ENCODE measurements at regions of chr5 and their contacts with region 1.

Region 1: DNA sequence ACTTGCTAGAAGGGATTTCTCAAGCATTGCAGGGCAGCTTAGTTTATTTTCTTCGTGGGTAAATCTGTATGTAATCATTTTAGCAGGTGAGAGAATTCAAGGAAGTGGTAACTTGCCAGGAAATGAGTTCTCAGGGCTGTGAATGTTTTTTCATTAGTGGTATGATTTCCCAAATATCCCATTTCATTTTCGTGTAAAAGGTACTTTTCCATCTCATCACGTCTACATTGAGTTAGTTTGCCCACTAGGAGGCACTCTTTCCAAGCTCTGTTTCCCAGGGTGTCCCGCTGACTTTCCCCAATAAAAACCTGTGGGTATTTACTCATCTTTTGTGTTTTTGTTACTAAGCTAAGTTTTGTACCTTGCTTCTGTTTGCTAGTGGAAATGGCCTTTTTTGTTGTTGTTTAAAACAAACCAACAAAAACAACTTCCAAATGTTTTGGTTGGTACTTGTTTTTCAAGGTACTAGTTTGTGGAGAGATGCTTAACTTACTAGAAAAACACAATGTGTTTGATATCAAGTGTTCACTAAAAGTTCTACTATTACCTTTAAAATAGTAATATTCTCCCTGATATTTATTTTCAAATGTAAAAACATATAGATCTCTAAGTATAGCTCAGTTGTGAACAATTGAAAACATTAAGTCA is 373.6 kb downstream of the ADGRV1 start:
- DNase-seq: peak; percentile 33
- ATAC-seq: peak; percentile 42
- H3K4me3 Mint-ChIP-seq: no peak overlapping the region
- H3K27ac Mint-ChIP-seq: no peak overlapping the region
- H3K4me1 Mint-ChIP-seq: peaks cover 2% of the 10 kb centered on the region
- H3K27me3 Mint-ChIP-seq: peaks cover 4% of the 10 kb centered on the region
- CTCF ChIP-seq: peak; percentile 89

Region 2: DNA sequence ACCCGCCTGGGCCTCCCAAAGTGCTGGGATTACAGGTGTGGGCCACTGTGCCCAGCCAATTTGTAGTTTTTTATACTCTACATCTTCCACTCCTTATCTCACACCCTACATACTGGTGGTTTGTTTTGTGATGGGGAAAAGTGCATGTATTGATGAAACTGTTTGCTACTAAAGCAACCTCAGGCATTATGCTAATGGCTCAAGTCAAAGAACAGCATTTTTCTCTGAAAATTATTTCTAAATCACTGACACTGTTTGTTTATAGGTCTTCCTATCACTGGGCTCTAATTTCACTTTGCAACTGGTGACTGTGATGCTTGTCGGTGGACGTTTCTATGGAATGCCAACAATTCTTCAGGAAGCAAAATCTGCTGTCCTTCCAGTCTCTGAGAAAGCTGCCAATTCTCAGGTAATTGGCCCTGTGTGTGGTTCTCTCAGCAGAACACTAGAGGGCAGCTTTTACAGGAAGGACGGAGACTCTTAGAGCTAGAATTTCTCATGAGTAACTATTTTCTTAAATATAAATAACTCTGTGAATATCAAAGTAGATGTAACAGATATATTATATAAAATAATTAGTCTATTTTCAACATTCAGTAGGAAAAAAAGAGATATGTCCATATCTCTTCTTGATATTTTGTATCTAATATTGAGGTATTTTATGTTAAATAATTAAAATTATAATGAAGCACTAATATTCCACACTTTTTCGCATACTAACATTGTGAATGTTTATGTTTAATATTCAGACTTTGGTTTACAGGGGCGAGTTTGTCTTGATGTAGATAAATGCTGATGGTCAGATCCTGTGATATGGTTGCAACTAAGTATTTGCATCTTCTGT is 129.5 kb before region 1 on chr5:
- CTCF ChIA-PET with region 1: no interaction called
- POLR2A ChIA-PET with region 1: no interaction called
- intact Hi-C with region 1: no loop called
- DNase-seq: peak; percentile 12
- ATAC-seq: peak; percentile 62
- H3K4me3 Mint-ChIP-seq: no peak overlapping the region
- H3K27ac Mint-ChIP-seq: no peak overlapping the region
- H3K4me1 Mint-ChIP-seq: no peaks in the 10 kb centered on the region
- H3K27me3 Mint-ChIP-seq: peaks cover 2% of the 10 kb centered on the region
- CTCF ChIP-seq: peak; percentile 72

Region 3: DNA sequence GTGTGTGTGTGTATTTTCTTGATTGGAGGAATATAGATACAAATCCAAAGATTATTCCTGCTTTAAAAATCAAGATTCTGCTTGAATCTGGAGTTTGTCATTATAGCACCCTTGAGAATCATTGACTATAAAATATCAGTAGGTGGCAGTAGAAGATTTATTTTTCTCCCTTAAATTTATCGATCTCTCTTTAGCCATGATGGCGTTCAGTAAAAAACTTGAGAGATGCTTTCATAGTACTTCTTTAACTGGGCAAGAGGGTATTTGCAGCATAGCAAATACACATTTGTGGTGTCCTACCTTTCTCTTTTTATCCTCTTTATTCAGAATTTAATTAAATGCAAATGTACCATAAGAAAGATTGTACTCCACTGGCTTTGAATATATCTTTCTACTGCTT is 65.8 kb before region 1 on chr5:
- CTCF ChIA-PET with region 1: interaction called, 15 read pairs
- POLR2A ChIA-PET with region 1: no interaction called
- intact Hi-C with region 1: no loop called
- DNase-seq: no peak
- ATAC-seq: peak; percentile 49
- H3K4me3 Mint-ChIP-seq: no peak overlapping the region
- H3K27ac Mint-ChIP-seq: no peak overlapping the region
- H3K4me1 Mint-ChIP-seq: peaks cover 13% of the 10 kb centered on the region
- H3K27me3 Mint-ChIP-seq: peaks cover 6% of the 10 kb centered on the region
- CTCF ChIP-seq: peak; percentile 52

Region 4: DNA sequence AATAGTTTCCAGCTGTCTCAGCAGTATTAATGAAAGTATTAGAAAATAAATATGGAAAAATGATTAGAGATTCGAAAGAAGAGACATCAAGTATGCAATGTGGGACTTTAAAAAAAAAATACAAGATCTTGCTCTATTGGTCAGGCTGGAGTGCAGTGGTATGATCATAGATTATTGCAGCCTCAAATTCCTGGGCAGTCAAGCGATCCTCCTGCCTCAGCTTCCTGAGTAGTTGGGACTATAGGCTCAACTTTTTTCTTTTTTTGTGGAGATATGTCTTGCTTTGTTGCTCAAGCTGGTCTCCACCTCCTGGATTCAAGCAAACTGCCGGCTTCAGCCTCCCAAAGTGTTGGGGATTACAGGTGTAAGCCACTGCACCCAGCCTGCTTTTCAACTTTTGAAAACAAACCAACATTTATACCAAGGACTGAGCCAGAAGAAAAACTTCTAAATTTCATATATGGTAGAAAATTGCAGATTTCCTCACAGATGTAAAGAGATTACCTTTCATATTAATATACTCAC is 50.5 kb before region 1 on chr5:
- CTCF ChIA-PET with region 1: interaction called, 13 read pairs
- POLR2A ChIA-PET with region 1: no interaction called
- intact Hi-C with region 1: no loop called
- DNase-seq: no peak
- ATAC-seq: no peak
- H3K4me3 Mint-ChIP-seq: no peak overlapping the region
- H3K27ac Mint-ChIP-seq: no peak overlapping the region
- H3K4me1 Mint-ChIP-seq: no peaks in the 10 kb centered on the region
- H3K27me3 Mint-ChIP-seq: peaks cover 20% of the 10 kb centered on the region
- CTCF ChIP-seq: no peak

Region 5: GRCh38 chr5:90921418-90921973 is 10.7 kb before region 1 on chr5:
- CTCF ChIA-PET with region 1: interaction called, 19 read pairs
- POLR2A ChIA-PET with region 1: no interaction called
- intact Hi-C with region 1: no loop called
- DNase-seq: no peak
- ATAC-seq: no peak
- H3K4me3 Mint-ChIP-seq: no peak overlapping the region
- H3K27ac Mint-ChIP-seq: no peak overlapping the region
- H3K4me1 Mint-ChIP-seq: no peaks in the 10 kb centered on the region
- H3K27me3 Mint-ChIP-seq: peaks cover 3% of the 10 kb centered on the region
- CTCF ChIP-seq: no peak

Region 6: GRCh38 chr5:91059409-91059808 is 127.2 kb after region 1 on chr5:
- CTCF ChIA-PET with region 1: interaction called, 11 read pairs
- POLR2A ChIA-PET with region 1: no interaction called
- intact Hi-C with region 1: loop called (anchors 5 kb)
- DNase-seq: no peak
- ATAC-seq: peak; percentile 86
- H3K4me3 Mint-ChIP-seq: no peak overlapping the region
- H3K27ac Mint-ChIP-seq: peak overlapping the region; percentile 31
- H3K4me1 Mint-ChIP-seq: peaks cover 41% of the 10 kb centered on the region
- H3K27me3 Mint-ChIP-seq: peaks cover 16% of the 10 kb centered on the region
- CTCF ChIP-seq: no peak

Region 7: DNA sequence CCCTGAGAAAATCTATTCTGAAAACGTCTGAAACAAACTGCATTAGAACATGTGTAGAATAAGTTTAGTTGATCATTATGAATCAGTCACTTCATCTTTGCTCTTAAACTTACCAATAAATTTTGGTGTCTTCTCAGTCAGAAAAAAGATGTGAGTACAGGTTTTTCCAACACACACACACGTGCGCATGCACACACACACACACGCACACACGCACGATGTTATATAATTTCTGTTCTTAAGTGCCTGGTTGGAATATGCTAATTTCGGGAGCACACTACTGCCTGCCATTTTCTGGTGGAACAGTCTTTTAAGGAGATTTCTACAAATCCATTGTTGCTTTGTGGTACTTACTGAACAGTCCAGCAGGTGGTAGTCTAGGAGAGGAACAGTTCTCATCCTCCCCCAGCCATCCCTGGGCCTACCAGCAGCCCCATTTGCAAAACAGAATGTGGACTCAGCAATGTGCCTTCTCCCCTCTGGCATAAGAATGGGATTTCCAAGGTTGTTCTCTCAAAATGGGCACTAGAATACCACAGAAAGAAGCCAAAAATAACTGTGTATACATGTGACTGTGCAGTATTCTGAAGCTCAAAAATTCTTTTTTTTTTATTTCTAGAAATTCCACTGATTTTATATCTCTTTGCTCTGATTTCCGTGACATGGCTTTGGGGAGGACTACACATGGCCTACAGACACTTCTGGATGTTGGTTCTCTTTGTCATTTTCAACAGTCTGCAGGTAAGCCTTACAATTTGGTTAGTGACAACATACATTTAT is 169.6 kb after region 1 on chr5:
- CTCF ChIA-PET with region 1: interaction called, 12 read pairs
- POLR2A ChIA-PET with region 1: no interaction called
- intact Hi-C with region 1: no loop called
- DNase-seq: peak; percentile 70
- ATAC-seq: peak; percentile 99
- H3K4me3 Mint-ChIP-seq: no peak overlapping the region
- H3K27ac Mint-ChIP-seq: no peak overlapping the region
- H3K4me1 Mint-ChIP-seq: no peaks in the 10 kb centered on the region
- H3K27me3 Mint-ChIP-seq: no peaks in the 10 kb centered on the region
- CTCF ChIP-seq: peak; percentile 63

Region 8: GRCh38 chr5:91219803-91220371 is 287.7 kb after region 1 on chr5:
- CTCF ChIA-PET with region 1: interaction called, 8 read pairs
- POLR2A ChIA-PET with region 1: no interaction called
- intact Hi-C with region 1: loop called (anchors 10 kb)
- DNase-seq: peak; percentile 62
- ATAC-seq: peak; percentile 47
- H3K4me3 Mint-ChIP-seq: no peak overlapping the region
- H3K27ac Mint-ChIP-seq: no peak overlapping the region
- H3K4me1 Mint-ChIP-seq: no peaks in the 10 kb centered on the region
- H3K27me3 Mint-ChIP-seq: no peaks in the 10 kb centered on the region
- CTCF ChIP-seq: peak; percentile 58

Measured in activated CD8-positive, alpha-beta T cell treated with anti-CD3 and anti-CD28 coated beads for 36 hours (primary cell).